Heart right ventricle (tissue), 16 donors: ENCODE measurements at regions of chr19 and their contacts with region 1.

Region 1: GRCh38 chr19:1315470-1316231 is 30.0 kb downstream of the EFNA2 start:
- DNase-seq: peak; percentile 26 to 59
- ATAC-seq: peak; percentile 66 to 86 (median 78)
- H3K4me3 ChIP-seq: peak overlapping the region in 6 of 10 donors; percentile 17 to 45 (median 30)
- H3K27ac ChIP-seq: no peak overlapping the region
- H3K4me1 ChIP-seq: peaks cover 0 to 9% (median 5%) of the 10 kb centered on the region in 9 donors
- H3K27me3 ChIP-seq: peaks cover 0 to 85% (median 65%) of the 10 kb centered on the region in 7 donors
- CTCF ChIP-seq: peak; percentile 35 to 82 (median 69)

Region 2: DNA sequence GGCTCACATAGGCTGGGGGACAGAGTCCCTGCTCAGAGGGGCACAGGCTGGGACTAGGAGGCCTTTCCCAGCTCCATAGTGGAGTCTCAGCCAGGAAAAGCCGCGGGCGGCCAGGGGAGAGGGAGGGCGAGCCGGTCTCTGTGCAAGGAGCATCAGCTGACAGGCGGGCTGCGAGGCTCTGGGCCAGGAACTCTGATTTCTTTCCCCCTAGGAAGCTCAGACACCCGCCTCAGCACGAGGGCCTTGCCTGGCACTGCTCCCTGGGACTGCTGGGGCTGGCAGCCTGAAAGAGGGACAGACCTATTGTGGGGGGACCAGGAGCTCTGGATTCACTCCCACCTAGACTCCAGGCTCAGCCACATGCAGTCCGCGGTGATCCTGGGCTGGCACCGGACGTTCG is 206.0 kb after region 1 on chr19:
- intact Hi-C with region 1: loop called in 1 of 10 experiments (anchors 10 kb)
- DNase-seq: peak in 1 of 2 donors; percentile 46
- ATAC-seq: peak; percentile 10 to 87 (median 68)
- H3K4me3 ChIP-seq: no peak overlapping the region
- H3K27ac ChIP-seq: peak overlapping the region in 5 of 10 donors; percentile 17 to 66 (median 50)
- H3K4me1 ChIP-seq: peaks cover 0 to 11% (median 4%) of the 10 kb centered on the region in 9 donors
- H3K27me3 ChIP-seq: peaks cover 26 to 44% (median 41%) of the 10 kb centered on the region in 7 donors
- CTCF ChIP-seq: no peak